CD8-positive, alpha-beta T cell (primary cell): ENCODE measurements at regions of chr6 and their contacts with region 1.

Region 1: GRCh38 chr6:163413345-163414116 is 987 bp upstream of the QKI start:
- DNase-seq: peak; percentile 71 to 95 (median 88)
- ATAC-seq: peak; percentile 71
- H3K4me3 ChIP-seq: peak overlapping the region; percentile 73 to 80
- H3K4me3 Mint-ChIP-seq: peak overlapping the region; percentile 85
- H3K27ac ChIP-seq: peak overlapping the region; percentile 85 to 94
- H3K27ac Mint-ChIP-seq: peak overlapping the region; percentile 90
- H3K4me1 ChIP-seq: peaks cover 19% of the 10 kb centered on the region
- H3K4me1 Mint-ChIP-seq: peaks cover 26% of the 10 kb centered on the region
- H3K27me3 ChIP-seq: no peaks in the 10 kb centered on the region
- H3K27me3 Mint-ChIP-seq: no peaks in the 10 kb centered on the region
- CTCF ChIP-seq: no peak

Region 2: DNA sequence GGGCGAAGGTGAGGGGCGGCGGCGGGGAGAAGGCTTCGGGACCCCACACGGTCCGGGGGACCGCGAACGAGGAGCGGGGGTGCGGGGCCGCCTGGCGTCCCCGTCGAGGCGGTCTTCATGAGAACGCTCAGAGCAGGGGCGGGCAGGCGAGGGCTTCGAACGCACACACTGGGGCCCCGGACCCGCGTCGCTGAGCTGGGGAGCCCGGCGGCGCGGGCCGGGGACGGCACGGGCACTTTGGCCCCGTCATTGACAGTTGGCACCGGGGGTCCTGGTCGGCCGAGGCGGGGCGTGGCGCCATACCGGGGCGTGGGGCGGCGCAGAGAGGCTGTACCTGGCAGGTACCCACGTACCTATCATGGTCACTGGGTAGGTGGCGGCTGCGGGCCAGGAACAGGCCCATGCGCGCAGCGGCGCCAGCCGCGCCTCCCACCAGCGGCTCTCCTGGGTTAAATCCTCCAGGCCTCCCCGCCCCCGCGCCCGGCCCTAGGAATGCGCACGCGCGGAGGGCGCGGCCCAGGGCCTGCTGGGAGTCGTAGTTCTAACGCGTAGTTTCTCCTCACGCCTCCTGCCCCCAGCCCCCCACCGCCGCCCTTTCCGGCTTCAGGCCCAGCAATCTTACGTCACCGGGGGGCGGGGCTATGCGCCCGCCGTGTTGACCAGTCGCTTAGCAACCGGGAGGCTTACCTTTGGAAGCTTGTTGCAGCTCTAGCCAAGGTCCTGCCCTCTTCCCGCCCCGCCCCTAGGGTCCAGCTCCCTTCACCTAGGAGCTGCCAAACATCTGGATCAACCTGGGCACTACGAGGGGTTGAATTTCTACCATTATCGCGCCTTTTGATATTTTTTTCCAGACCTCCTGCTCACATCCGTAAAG is 686.0 kb before region 1 on chr6 and contains the starts of genes PACRG and PRKN:
- CTCF ChIA-PET with region 1: no interaction called
- POLR2A ChIA-PET with region 1: no interaction called
- intact Hi-C with region 1: loop called (anchors 1 to 2 kb)
- DNase-seq: peak; percentile 95 to 99 (median 97)
- ATAC-seq: peak; percentile 93
- H3K4me3 ChIP-seq: peak within 1 kb of the TSS; percentile 54 to 87
- H3K4me3 Mint-ChIP-seq: peak within 1 kb of the TSS; percentile 96
- H3K27ac ChIP-seq: peak within 1 kb of the TSS; percentile 68 to 73
- H3K27ac Mint-ChIP-seq: peak within 1 kb of the TSS; percentile 94
- H3K4me1 ChIP-seq: peaks cover 12% of the 10 kb centered on the region
- H3K4me1 Mint-ChIP-seq: peaks cover 16% of the 10 kb centered on the region
- H3K27me3 ChIP-seq: no peaks in the 10 kb centered on the region
- H3K27me3 Mint-ChIP-seq: no peaks in the 10 kb centered on the region
- CTCF ChIP-seq: no peak
- total RNA-seq, gene PACRG: 0.57 to 0.75 TPM
- total RNA-seq, gene PRKN: 3.4 to 3.6 TPM

Region 3: DNA sequence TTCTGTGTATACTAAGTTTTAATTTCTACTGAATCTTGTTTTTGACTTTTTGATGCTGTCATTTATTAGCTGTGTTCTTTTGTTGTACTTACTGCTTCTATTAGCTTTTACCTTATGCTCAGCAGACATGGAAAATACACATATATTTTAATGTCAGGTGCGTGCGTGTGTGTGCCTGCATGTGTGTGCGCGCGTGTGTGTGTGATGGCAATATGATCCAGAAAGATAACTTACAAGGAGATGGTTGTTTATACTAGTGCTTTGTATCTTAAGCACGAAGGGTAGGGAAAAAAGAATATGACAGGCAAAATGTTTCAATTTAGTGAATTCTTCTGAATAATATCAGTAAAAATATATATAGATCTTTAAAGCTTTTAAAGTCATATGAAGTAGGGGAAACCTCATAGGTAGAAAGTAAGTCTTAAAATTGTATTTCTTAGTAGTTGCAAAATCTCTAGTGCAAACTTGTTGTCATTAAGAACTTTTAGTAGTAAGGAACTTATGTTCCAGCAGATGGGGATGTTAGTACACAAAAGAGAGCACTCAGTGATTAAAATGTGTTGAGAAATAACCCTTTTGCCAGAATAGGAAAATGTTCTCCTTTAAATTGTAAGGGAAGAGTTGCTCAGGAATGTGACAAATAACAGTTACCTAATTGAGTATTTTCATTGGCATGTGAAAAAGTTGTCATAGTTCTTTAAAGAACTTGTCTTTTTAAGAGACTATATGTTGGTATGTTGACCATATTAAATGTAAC is 14.1 kb after region 1 on chr6:
- CTCF ChIA-PET with region 1: interaction called, 17 read pairs
- POLR2A ChIA-PET with region 1: no interaction called
- intact Hi-C with region 1: no loop called
- DNase-seq: peak in 2 of 9 experiments; percentile 48 to 59
- ATAC-seq: no peak
- H3K4me3 ChIP-seq: no peak overlapping the region
- H3K4me3 Mint-ChIP-seq: no peak overlapping the region
- H3K27ac ChIP-seq: no peak overlapping the region
- H3K27ac Mint-ChIP-seq: no peak overlapping the region
- H3K4me1 ChIP-seq: no peaks in the 10 kb centered on the region
- H3K4me1 Mint-ChIP-seq: peaks cover 48% of the 10 kb centered on the region
- H3K27me3 ChIP-seq: no peaks in the 10 kb centered on the region
- H3K27me3 Mint-ChIP-seq: no peaks in the 10 kb centered on the region
- CTCF ChIP-seq: no peak

Region 4: GRCh38 chr6:163460307-163460782 is 46.8 kb after region 1 on chr6:
- CTCF ChIA-PET with region 1: interaction called, 5 read pairs
- POLR2A ChIA-PET with region 1: interaction called, 7 read pairs
- intact Hi-C with region 1: loop called (anchors 2 kb)
- DNase-seq: peak in 6 of 9 experiments; percentile 2 to 74 (median 33)
- ATAC-seq: peak; percentile 90
- H3K4me3 ChIP-seq: peak overlapping the region; percentile 48 to 56
- H3K4me3 Mint-ChIP-seq: peak overlapping the region; percentile 92
- H3K27ac ChIP-seq: peak overlapping the region; percentile 76 to 88
- H3K27ac Mint-ChIP-seq: peak overlapping the region; percentile 98
- H3K4me1 ChIP-seq: peaks cover 28% of the 10 kb centered on the region
- H3K4me1 Mint-ChIP-seq: peaks cover 58% of the 10 kb centered on the region
- H3K27me3 ChIP-seq: no peaks in the 10 kb centered on the region
- H3K27me3 Mint-ChIP-seq: no peaks in the 10 kb centered on the region
- CTCF ChIP-seq: no peak

Region 5: DNA sequence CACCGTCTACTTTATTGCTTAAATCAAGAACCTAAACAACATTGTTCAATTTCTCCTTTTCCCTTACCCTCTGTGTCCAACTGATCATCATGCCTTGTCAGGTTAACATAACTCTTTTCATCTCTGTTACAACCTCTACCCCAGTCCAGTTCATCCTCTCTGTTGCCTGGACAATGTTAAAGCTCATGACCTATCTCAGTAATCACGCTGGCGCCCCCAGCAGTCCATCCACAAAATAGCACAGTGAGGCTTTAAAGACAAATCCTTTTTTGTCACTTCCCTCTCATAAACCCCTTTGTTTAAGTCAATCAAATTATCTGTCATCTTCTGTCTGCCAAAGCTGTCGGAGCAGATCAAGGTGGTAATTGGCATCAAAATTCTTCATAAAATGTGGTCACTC is 141.1 kb after region 1 on chr6:
- CTCF ChIA-PET with region 1: interaction called, 10 read pairs
- POLR2A ChIA-PET with region 1: no interaction called
- intact Hi-C with region 1: loop called in 1 of 2 experiments (anchors 1 kb)
- DNase-seq: peak; percentile 26 to 66 (median 58)
- ATAC-seq: peak; percentile 69
- H3K4me3 ChIP-seq: no peak overlapping the region
- H3K4me3 Mint-ChIP-seq: no peak overlapping the region
- H3K27ac ChIP-seq: no peak overlapping the region
- H3K27ac Mint-ChIP-seq: no peak overlapping the region
- H3K4me1 ChIP-seq: no peaks in the 10 kb centered on the region
- H3K4me1 Mint-ChIP-seq: peaks cover 8% of the 10 kb centered on the region
- H3K27me3 ChIP-seq: no peaks in the 10 kb centered on the region
- H3K27me3 Mint-ChIP-seq: no peaks in the 10 kb centered on the region
- CTCF ChIP-seq: peak; percentile 75

Region 6: DNA sequence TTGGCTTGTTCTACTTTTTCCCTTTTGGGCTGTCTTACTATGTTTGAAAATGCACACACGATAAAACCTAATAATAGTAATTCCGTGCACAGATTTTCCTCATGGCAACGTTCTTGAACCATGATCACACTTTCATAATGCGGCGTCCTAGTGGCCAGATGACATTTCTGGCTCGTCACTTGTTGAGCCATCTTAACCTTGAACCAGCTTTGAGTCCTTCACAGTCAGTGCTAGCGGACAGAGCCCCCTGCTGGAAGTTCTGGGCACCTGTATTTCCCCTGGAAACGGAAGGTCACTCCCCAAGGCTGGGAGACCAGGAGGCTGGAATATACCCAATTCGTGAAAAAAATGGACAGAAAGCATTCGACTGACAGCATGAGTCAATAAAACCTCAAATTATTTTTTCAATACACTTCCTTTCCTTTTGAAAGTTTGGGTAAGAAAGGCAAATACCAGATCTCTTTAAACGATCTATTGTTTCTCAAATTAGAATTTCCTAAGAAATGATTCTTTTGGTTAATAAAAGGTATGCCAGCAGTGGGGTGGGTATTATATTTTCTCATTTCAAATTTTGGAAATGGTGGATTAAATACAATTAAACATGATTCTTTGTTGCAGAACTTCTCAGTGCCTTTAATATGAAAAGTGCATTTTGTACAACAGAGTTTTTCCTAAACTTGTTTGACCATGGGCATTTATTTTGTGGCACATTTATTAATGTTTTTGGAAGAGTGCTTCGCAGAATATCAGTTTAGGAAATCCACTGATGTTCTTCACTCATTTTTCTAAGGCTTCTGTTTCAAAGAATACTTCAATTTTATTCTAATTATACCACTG is 543.3 kb after region 1 on chr6:
- CTCF ChIA-PET with region 1: no interaction called
- POLR2A ChIA-PET with region 1: no interaction called
- intact Hi-C with region 1: loop called in 1 of 2 experiments (anchors 2 kb)
- DNase-seq: peak; percentile 8 to 69 (median 51)
- ATAC-seq: peak; percentile 34
- H3K4me3 ChIP-seq: no peak overlapping the region
- H3K4me3 Mint-ChIP-seq: no peak overlapping the region
- H3K27ac ChIP-seq: no peak overlapping the region
- H3K27ac Mint-ChIP-seq: no peak overlapping the region
- H3K4me1 ChIP-seq: peaks cover 3% of the 10 kb centered on the region
- H3K4me1 Mint-ChIP-seq: peaks cover 6% of the 10 kb centered on the region
- H3K27me3 ChIP-seq: no peaks in the 10 kb centered on the region
- H3K27me3 Mint-ChIP-seq: peaks cover 28% of the 10 kb centered on the region
- CTCF ChIP-seq: peak; percentile 67